H1 (cell line): ENCODE measurements at regions of chr11 and their contacts with region 1.

Region 1: GRCh38 chr11:2955906-2956476 is 26.8 kb upstream of the PHLDA2 start:
- DNase-seq: no peak
- H3K4me3 ChIP-seq: no peak overlapping the region
- H3K27ac ChIP-seq: no peak overlapping the region; the same call in 1 of the 2 replicates
- H3K4me1 ChIP-seq: peaks cover 0 to 3% (median 1%) of the 10 kb centered on the region in 4 experiments; a peak in 3 of 7 replicates
- H3K27me3 ChIP-seq: no peaks in the 10 kb centered on the region
- CTCF ChIP-seq: peak; percentile 7 to 33 (median 29)
- EP300 ChIP-seq: no peak
- POLR2A ChIP-seq: no peak
- RAD21 ChIP-seq: peak in 1 of 2 experiments; percentile 27; a peak in 1 of 4 replicates

Region 2: GRCh38 chr11:2912498-2912897 is 43.5 kb before region 1 on chr11:
- CTCF ChIA-PET with region 1: no interaction called
- POLR2A ChIA-PET with region 1: no interaction called
- DNase-seq: no peak
- H3K4me3 ChIP-seq: no peak overlapping the region
- H3K27ac ChIP-seq: no peak overlapping the region
- H3K4me1 ChIP-seq: peaks cover 0 to 19% (median 8%) of the 10 kb centered on the region in 4 experiments; a peak in 4 of 7 replicates
- H3K27me3 ChIP-seq: no peaks in the 10 kb centered on the region
- CTCF ChIP-seq: no peak
- EP300 ChIP-seq: no peak
- POLR2A ChIP-seq: no peak
- RAD21 ChIP-seq: no peak

Region 3: DNA sequence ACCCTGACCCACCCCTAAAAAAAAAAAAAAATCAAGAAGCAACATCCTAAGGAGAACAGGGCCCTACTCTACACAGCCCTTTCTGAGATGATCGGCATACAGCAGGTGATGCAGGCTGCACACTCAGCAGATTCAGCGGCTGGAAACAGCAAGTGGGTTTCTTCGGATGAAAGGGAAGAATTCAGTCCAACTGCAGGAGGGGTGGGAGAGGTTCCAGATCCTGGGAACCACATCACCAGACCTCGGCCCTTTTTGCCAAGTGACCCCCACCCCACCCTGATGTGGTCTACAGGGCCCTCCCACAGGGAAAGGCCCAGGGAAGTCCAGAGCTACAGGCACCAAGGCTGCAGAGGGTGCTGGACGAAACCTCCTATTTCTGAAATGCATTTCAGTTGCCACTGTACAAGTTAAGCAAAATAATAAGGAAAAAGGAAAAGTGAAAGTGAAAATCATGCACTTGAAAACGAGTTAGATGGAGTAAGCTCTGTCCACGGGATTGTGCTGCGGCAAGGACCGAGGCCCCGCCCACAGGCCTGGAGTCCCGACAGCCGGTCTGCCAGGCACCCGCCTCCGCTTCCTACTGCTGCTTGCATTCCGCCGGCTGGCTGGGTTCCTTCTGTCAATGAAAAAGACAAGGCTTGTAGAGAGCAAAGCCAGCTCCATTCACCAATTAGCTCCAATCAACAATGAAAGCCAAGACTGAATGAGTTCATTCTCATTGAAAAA is 10.8 kb before region 1 on chr11:
- CTCF ChIA-PET with region 1: interaction called, 10 read pairs
- POLR2A ChIA-PET with region 1: interaction called, 13 read pairs
- DNase-seq: peak; percentile 39 to 80
- H3K4me3 ChIP-seq: peak overlapping the region in 1 of 4 experiments; percentile 19; a peak in 1 of 8 replicates
- H3K27ac ChIP-seq: no peak overlapping the region
- H3K4me1 ChIP-seq: peaks cover 0 to 30% (median 12%) of the 10 kb centered on the region in 4 experiments; a peak in 6 of 7 replicates
- H3K27me3 ChIP-seq: no peaks in the 10 kb centered on the region
- CTCF ChIP-seq: no peak
- EP300 ChIP-seq: no peak
- POLR2A ChIP-seq: no peak
- RAD21 ChIP-seq: no peak